Endothelial cell of umbilical vein (primary cell): ENCODE measurements at regions of chr2 and their contacts with region 1.

Region 1: GRCh38 chr2:141341444-141341843 is 789.4 kb downstream of the LRP1B start:
- DNase-seq: peak; percentile 74
- H3K4me3 ChIP-seq: no peak overlapping the region
- H3K27ac ChIP-seq: no peak overlapping the region
- H3K4me1 ChIP-seq: peaks cover 3% of the 10 kb centered on the region
- H3K27me3 ChIP-seq: no peaks in the 10 kb centered on the region
- CTCF ChIP-seq: no peak
- POLR2A ChIP-seq: no peak

Region 2: GRCh38 chr2:141331127-141331526 is 10.3 kb before region 1 on chr2:
- CTCF ChIA-PET with region 1: interaction called, 10 read pairs
- POLR2A ChIA-PET with region 1: no interaction called
- dilution Hi-C with region 1: no loop called
- intact Hi-C with region 1: no loop called
- DNase-seq: peak; percentile 5
- H3K4me3 ChIP-seq: no peak overlapping the region
- H3K27ac ChIP-seq: no peak overlapping the region
- H3K4me1 ChIP-seq: no peaks in the 10 kb centered on the region
- H3K27me3 ChIP-seq: no peaks in the 10 kb centered on the region
- CTCF ChIP-seq: no peak
- POLR2A ChIP-seq: no peak

Region 3: DNA sequence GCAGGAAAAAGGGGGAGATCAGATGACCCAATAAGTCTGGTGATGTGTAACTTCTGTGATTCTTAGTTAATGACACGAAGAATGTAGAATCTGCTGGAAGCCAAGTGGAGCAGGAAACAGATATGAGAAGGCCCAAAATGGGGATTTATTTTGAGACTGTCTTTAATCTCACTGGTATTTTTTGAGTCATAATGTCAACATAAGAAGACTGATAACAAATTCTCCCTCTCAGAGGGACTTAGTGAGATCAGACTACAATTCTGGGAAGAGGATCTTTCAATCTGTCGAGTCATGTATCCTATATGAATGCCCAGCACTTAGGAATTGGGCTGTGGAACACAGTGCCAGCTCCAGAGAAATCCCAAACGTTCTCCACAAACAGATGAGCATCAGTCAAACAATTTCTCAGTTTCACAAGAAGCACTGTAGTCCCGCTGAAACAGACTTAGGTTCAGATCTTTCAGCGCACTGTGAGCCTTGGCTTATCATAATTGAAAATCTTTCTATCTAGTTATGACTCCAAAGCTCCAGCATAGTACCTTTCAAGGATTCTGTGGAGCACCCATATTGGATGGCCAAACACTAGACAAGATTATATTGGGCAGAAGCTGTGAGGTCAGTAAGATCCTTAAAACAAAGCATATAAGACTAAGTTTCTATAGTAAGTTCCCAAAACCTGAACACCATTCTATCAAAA is 51.2 kb after region 1 on chr2:
- CTCF ChIA-PET with region 1: no interaction called
- POLR2A ChIA-PET with region 1: no interaction called
- dilution Hi-C with region 1: no loop called
- intact Hi-C with region 1: loop called (anchors 2 kb)
- DNase-seq: peak; percentile 62
- H3K4me3 ChIP-seq: no peak overlapping the region
- H3K27ac ChIP-seq: peak overlapping the region; percentile 88
- H3K4me1 ChIP-seq: peaks cover 16% of the 10 kb centered on the region
- H3K27me3 ChIP-seq: no peaks in the 10 kb centered on the region
- CTCF ChIP-seq: no peak
- POLR2A ChIP-seq: no peak